ENCODE measurements at regions of chr10 and their contacts with region 1.

Region 1: GRCh38 chr10:30493609-30494530 is 59.9 kb downstream of the MAP3K8 start:
- DNase-seq: peak; percentile 29
- ATAC-seq: no peak
- H3K4me3 Mint-ChIP-seq: no peak overlapping the region
- H3K27ac Mint-ChIP-seq: peak overlapping the region; percentile 73
- H3K4me1 Mint-ChIP-seq: peaks cover 86% of the 10 kb centered on the region
- H3K27me3 Mint-ChIP-seq: peaks cover 3% of the 10 kb centered on the region

Region 2: DNA sequence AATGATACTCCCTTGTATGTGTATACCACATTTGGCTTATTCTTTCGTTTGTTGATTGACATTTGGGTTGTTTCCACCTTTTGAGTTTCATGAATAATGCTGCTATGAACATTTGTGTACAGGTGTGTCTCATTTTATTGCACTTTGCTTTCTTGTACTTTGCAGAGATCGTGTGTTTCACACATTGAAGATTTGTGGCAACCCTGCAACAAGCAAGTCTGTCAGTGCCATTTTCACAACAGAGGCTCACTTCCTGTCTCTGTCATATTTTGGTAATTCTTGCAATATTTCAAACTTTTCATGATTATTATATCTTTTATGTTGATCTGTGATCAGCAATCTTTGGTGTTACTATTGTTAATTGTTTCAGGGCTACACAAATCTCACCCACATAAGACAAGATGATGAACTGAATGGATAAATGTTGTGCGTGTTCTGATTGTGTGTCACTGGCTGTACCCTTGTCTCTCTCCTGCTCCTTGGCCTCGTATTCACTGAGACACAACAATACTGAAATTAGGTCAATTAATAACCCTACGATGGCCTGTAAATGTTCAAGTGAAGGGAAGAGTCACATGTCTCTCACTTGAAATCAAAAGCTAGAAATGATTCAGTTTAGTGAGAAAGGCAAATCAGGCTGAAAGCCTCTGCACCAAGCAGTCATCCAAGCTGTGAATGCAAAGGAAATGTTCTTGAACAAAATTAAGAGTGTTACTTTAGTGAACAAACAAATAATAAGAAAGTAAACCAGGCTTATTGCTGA is 300.8 kb before region 1 on chr10:
- CTCF ChIA-PET with region 1: no interaction called
- POLR2A ChIA-PET with region 1: no interaction called
- DNase-seq: no peak
- ATAC-seq: no peak
- H3K4me3 Mint-ChIP-seq: no peak overlapping the region
- H3K27ac Mint-ChIP-seq: no peak overlapping the region
- H3K4me1 Mint-ChIP-seq: no peaks in the 10 kb centered on the region
- H3K27me3 Mint-ChIP-seq: peaks cover 24% of the 10 kb centered on the region

Region 3: DNA sequence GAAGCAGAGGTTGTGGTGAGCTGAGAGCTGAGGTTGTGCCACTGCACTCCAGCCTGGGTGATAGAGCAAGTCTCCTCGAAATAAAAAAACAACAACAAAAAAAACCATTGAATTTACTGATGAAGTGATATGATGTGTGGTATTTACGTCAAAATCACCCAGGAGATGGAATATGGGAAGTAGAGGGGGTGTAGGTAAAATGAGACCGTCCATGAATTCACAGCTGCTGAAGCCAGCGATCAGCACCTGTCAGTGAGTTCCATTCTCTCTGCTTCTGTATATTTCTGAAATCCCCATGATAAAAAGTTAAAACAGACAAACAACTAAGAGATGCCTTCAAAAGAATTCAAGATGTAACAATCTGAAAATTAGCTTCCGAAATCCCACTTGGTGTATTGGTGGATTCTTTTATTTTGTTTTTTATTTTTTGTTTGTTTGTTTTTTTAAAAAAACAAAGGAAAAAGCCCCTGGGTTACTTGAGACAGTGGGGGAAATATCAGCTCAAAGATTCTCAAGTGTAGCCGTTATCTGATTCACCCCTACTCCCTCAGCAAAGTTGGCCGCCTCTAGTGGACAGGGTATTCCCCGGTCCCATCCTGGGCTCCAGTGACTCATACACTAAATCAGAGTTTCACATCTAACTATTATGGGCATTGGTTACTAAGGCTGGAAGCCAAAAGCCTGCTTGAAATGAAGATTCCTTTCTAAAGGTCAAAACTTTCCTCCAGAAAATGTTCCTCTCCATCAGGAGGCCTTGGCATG is 16.5 kb after region 1 on chr10:
- CTCF ChIA-PET with region 1: interaction called, 21 read pairs
- POLR2A ChIA-PET with region 1: interaction called, 6 read pairs
- DNase-seq: no peak
- ATAC-seq: peak; percentile 47
- H3K4me3 Mint-ChIP-seq: no peak overlapping the region
- H3K27ac Mint-ChIP-seq: no peak overlapping the region
- H3K4me1 Mint-ChIP-seq: peaks cover 48% of the 10 kb centered on the region
- H3K27me3 Mint-ChIP-seq: no peaks in the 10 kb centered on the region

Region 4: GRCh38 chr10:30534465-30535144 is 40.7 kb after region 1 on chr10:
- CTCF ChIA-PET with region 1: interaction called, 35 read pairs
- POLR2A ChIA-PET with region 1: interaction called, 16 read pairs
- DNase-seq: peak; percentile 86
- ATAC-seq: peak; percentile 48
- H3K4me3 Mint-ChIP-seq: no peak overlapping the region
- H3K27ac Mint-ChIP-seq: no peak overlapping the region
- H3K4me1 Mint-ChIP-seq: peaks cover 59% of the 10 kb centered on the region
- H3K27me3 Mint-ChIP-seq: no peaks in the 10 kb centered on the region

Region 5: GRCh38 chr10:31197886-31198285 is 704.0 kb after region 1 on chr10:
- CTCF ChIA-PET with region 1: no interaction called
- POLR2A ChIA-PET with region 1: no interaction called
- DNase-seq: no peak
- ATAC-seq: no peak
- H3K4me3 Mint-ChIP-seq: no peak overlapping the region
- H3K27ac Mint-ChIP-seq: no peak overlapping the region
- H3K4me1 Mint-ChIP-seq: no peaks in the 10 kb centered on the region
- H3K27me3 Mint-ChIP-seq: no peaks in the 10 kb centered on the region

Measured in activated CD8-positive, alpha-beta T cell treated with anti-CD3 and anti-CD28 coated beads, Interleukin-2, amount 10 ng/mL, durations not matched to agents 7 days and 5 days (primary cell).